ENCODE measurements at regions of chr2 and their contacts with region 1.

Region 1: GRCh38 chr2:28909655-28910353 is 15.3 kb downstream of the WDR43 start:
- DNase-seq: no peak
- H3K4me3 ChIP-seq: no peak overlapping the region
- H3K27ac ChIP-seq: no peak overlapping the region
- H3K4me1 ChIP-seq: no peaks in the 10 kb centered on the region
- CTCF ChIP-seq: no peak

Region 2: DNA sequence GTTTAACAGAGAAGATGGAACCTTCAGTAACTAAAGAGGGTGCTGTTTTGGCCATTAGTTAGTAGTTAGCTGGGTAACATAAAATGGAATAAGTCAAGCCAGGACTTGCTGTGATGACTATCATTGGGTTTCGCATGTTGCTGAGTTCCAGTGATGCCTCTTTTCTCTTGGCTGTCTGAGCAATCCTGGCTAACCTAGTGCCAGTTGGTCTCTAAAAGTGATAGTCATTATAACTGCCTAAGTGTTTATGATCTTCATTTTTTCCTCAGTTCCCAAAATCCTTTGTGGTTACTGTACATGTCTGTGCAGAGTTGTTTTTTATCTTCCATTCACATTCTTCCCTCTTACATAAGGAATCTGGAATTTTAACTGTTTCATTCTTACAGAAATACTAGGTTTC is 18.1 kb after region 1 on chr2:
- CTCF ChIA-PET with region 1: no interaction called
- POLR2A ChIA-PET with region 1: interaction called, 10 read pairs
- intact Hi-C with region 1: no loop called
- DNase-seq: no peak
- H3K4me3 ChIP-seq: no peak overlapping the region
- H3K27ac ChIP-seq: no peak overlapping the region
- H3K4me1 ChIP-seq: no peaks in the 10 kb centered on the region
- CTCF ChIP-seq: no peak

Measured in OCI-LY7 (cell line).